HEK293 (cell line): ENCODE measurements at regions of chr11 and their contacts with region 1.

Region 1: GRCh38 chr11:122215244-122215992 is 99.4 kb upstream of the BLID start:
- H3K4me3 ChIP-seq: no peak overlapping the region
- H3K27ac ChIP-seq: no peak overlapping the region
- H3K4me1 ChIP-seq: peaks cover 1% of the 10 kb centered on the region; the same call in 1 of the 2 replicates
- CTCF ChIP-seq: peak; percentile 50; the same call in 1 of the 2 replicates

Region 2: DNA sequence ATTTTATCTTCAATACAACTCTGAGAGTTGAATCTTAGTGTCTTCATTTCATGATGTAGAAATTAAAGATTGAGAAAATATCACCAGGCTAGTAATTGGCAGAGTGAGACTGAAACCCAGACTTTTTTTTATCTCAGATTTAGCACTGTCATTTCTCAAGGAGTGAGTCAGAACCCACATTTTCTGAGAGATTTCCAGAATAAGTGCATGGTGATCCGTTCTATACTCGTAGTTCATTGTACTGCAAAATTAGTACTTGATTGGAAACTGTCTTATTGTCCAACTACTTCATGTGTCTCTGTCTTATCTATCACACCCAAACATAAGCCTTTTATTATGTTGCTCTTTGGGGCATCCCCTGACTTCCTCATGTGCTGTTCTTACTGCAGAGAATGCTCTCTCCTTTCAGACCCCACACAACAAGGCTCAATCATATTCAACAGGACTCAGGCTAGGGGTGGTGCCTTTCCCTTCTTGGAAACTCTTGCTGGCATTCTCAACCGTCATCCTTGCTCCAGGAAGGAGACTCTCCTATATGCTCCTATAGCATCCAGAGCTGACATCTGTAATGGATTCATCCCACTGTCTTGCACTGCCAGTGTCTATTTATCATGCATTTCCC is 22.7 kb before region 1 on chr11:
- CTCF ChIA-PET with region 1: interaction called, 11 read pairs
- POLR2A ChIA-PET with region 1: no interaction called
- H3K4me3 ChIP-seq: no peak overlapping the region
- H3K27ac ChIP-seq: no peak overlapping the region
- H3K4me1 ChIP-seq: no peaks in the 10 kb centered on the region
- CTCF ChIP-seq: no peak

Region 3: GRCh38 chr11:122202951-122203456 is 12.4 kb before region 1 on chr11:
- CTCF ChIA-PET with region 1: interaction called, 12 read pairs
- POLR2A ChIA-PET with region 1: no interaction called
- H3K4me3 ChIP-seq: no peak overlapping the region
- H3K27ac ChIP-seq: no peak overlapping the region
- H3K4me1 ChIP-seq: peaks cover 9% of the 10 kb centered on the region
- CTCF ChIP-seq: 0 out of 2 replicates have a peak, but pooled peaks have one; percentile 30

Region 4: DNA sequence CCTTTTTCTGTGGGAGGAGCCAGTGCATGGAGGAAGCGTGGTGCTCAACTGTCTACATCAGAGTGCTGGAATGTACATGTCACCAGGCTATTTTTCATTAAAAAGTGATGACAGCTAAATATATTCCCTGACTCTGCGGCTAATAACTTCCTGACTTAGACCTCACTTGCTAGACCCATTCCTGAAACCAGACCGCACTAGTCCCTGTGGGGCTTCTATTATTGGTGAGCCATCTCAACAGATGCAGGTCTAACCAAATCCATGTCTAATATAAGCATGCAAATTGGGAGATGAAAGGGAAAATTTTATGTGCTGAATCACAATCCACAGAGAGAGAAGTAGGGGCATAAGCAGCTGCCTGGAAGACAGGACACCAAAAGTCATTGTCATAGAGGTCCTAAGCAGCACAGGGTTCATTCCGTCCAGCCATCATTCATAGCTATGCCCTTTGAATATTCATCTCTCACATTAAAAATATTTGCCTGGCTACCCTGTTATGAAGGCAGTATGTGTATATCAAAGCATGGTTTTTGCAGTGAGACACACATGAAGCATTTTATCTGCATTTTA is 11.5 kb after region 1 on chr11:
- CTCF ChIA-PET with region 1: interaction called, 17 read pairs
- POLR2A ChIA-PET with region 1: no interaction called
- H3K4me3 ChIP-seq: no peak overlapping the region
- H3K27ac ChIP-seq: no peak overlapping the region
- H3K4me1 ChIP-seq: no peaks in the 10 kb centered on the region
- CTCF ChIP-seq: no peak

Region 5: GRCh38 chr11:122505304-122506006 is 290.0 kb after region 1 on chr11:
- CTCF ChIA-PET with region 1: interaction called, 44 read pairs
- POLR2A ChIA-PET with region 1: no interaction called
- H3K4me3 ChIP-seq: no peak overlapping the region
- H3K27ac ChIP-seq: no peak overlapping the region
- H3K4me1 ChIP-seq: no peaks in the 10 kb centered on the region
- CTCF ChIP-seq: peak; percentile 76; the same call in 1 of the 2 replicates